ENCODE measurements at regions of chr10 and their contacts with region 1.

Region 1: DNA sequence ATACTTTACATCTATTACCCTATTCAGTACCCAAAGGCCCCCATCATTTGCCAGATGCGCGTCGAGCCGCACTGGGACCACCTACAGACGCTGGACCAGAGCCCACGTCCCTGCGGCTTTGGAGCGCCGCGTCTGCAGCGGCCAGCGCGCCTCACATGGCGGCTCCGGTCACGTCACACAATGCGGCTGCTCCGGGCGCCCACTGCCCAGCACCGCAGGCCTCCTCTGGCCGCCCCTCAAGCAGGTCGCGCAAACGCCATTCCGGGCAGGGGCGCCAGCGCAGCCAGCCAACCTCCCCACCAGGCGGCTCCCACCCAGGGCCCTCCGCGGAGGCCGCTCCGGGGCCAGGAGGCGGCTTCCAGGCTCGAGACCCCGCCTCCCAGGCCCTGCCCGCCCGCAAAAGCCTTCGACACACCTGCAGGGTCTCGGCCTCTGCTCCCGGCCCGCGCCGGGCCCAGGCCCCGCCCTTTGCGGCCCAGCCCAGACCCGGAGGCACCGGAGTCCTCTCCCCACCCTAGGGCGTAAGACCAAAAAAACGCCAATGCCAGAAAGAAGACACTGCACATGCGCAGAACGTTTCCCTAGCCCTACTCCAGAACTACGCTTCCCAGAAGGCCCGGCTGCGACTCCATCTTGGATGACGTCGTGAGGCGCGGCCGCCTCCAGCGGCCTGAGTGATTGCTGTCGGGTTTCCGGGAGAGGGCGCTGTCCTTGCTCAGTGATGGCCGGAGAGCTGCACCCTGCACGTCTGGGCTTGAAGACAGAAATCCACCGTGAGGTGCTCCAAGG is at the start of gene ZNF25:
- DNase-seq: peak; percentile 99
- H3K4me3 Mint-ChIP-seq: peak within 1 kb of the TSS; percentile 87
- H3K27ac Mint-ChIP-seq: peak within 1 kb of the TSS; percentile 95
- H3K4me1 Mint-ChIP-seq: peaks cover 22% of the 10 kb centered on the region
- H3K27me3 Mint-ChIP-seq: no peaks in the 10 kb centered on the region
- total RNA-seq, gene ZNF25: 7.6 to 9.4 TPM

Region 2: GRCh38 chr10:37857287-37858211 is 118.7 kb before region 1 on chr10 and contains the start of gene ZNF248:
- CTCF ChIA-PET with region 1: interaction called, 6 read pairs
- intact Hi-C with region 1: loop called (anchors 1 kb)
- DNase-seq: peak; percentile 94
- H3K4me3 Mint-ChIP-seq: peak within 1 kb of the TSS; percentile 92
- H3K27ac Mint-ChIP-seq: peak within 1 kb of the TSS; percentile 97
- H3K4me1 Mint-ChIP-seq: peaks cover 30% of the 10 kb centered on the region
- H3K27me3 Mint-ChIP-seq: no peaks in the 10 kb centered on the region
- total RNA-seq, gene ZNF248: 4.6 to 5.5 TPM

Region 3: DNA sequence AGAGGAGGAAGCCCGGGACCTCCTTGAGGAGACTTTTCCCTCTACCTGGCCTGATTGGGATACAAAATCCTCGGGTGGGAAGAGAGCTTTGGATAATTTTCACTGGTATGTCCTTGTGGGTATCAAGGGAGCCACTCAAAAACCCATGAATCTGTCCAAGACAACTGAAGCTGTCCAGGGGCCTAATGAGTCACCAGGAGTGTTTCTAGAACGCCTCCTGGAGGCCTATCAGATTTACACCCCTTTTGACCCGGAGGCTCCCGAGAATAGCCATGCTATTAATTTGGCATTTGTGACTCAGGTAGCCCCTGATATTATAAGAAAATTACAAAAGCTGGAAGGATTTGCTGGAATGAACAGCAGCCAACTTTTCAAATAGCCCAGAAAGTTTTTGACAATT is 38.4 kb before region 1 on chr10:
- CTCF ChIA-PET with region 1: no interaction called
- intact Hi-C with region 1: no loop called
- DNase-seq: no peak
- H3K4me3 Mint-ChIP-seq: no peak overlapping the region
- H3K27ac Mint-ChIP-seq: no peak overlapping the region
- H3K4me1 Mint-ChIP-seq: no peaks in the 10 kb centered on the region
- H3K27me3 Mint-ChIP-seq: no peaks in the 10 kb centered on the region

Region 4: DNA sequence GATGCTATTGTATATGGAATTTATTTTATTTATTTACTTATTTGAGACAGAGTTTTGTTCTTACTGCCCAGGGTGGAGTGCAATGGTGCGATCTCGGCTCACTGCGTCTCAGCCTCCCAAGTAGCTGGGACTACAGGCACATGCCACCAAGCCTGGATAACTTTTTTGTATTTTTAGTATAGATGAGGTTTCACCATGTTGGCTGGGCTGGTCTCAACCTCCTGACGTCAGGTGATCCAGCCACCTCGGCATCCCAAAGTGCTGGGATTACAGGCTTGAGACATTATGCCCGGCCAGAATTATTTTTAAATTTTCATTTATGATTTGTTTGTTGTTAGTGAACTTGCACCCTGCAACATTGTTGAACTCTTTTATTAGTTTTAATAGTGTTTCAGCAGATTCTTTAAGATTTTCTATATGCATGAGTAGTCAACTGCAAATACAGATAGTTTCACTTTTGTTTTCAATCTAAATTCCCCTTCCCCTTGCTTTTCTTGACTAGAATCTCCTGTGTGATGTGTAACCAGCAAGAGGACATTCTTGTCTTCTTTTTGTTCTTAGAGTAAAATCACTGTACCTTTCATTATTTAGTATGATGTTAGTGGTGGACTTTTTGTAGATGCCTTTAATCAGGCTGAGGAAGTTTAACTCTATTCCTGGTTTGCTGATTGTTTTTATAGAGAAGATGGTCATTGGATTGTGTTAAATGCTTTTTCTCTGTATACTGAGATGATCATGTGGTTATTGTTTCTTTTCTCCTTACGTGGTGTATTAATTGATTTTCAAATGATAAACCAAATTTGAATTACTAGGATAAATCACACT is 62.0 kb after region 1 on chr10:
- CTCF ChIA-PET with region 1: no interaction called
- intact Hi-C with region 1: loop called (anchors 1 kb)
- DNase-seq: no peak
- H3K4me3 Mint-ChIP-seq: peak overlapping the region; percentile 60
- H3K27ac Mint-ChIP-seq: peak overlapping the region; percentile 87
- H3K4me1 Mint-ChIP-seq: peaks cover 28% of the 10 kb centered on the region
- H3K27me3 Mint-ChIP-seq: no peaks in the 10 kb centered on the region

Region 5: DNA sequence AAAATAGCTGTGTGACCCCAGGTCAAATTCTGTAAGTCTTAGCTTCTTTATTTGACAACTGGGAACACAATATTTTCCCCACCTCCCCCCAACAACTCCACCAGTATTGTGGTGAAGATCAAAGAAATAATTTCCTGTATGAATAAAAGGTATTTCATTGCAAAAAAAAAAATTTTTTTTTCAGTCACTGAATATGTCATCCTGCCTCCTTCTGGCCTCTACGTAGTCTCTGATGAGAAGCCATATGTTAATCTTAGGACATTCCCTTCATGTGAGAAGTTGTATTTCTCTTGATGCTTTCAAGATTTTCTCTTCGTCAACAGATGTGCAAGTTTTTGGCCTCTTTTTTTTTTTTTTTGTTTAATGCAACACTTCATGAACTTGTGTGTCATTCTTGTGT is 67.2 kb after region 1 on chr10:
- CTCF ChIA-PET with region 1: no interaction called
- intact Hi-C with region 1: loop called (anchors 1 kb)
- DNase-seq: no peak
- H3K4me3 Mint-ChIP-seq: no peak overlapping the region
- H3K27ac Mint-ChIP-seq: no peak overlapping the region
- H3K4me1 Mint-ChIP-seq: peaks cover 44% of the 10 kb centered on the region
- H3K27me3 Mint-ChIP-seq: no peaks in the 10 kb centered on the region

Region 6: GRCh38 chr10:38094158-38094920 is 118.1 kb after region 1 on chr10 and contains the start of gene ZNF37A:
- CTCF ChIA-PET with region 1: interaction called, 9 read pairs
- intact Hi-C with region 1: loop called (anchors 1 kb)
- DNase-seq: peak; percentile 95
- H3K4me3 Mint-ChIP-seq: peak within 1 kb of the TSS; percentile 85
- H3K27ac Mint-ChIP-seq: peak within 1 kb of the TSS; percentile 87
- H3K4me1 Mint-ChIP-seq: peaks cover 33% of the 10 kb centered on the region
- H3K27me3 Mint-ChIP-seq: no peaks in the 10 kb centered on the region
- total RNA-seq, gene ZNF37A: 15.5 to 18.8 TPM

Measured in activated naive CD4-positive, alpha-beta T cell treated with anti-CD3 and anti-CD28 coated beads for 36 hours (primary cell).